Left cardiac atrium (tissue), 4 donors: ENCODE measurements at regions of chr17 and their contacts with region 1.

Region 1: GRCh38 chr17:5065227-5065744 is 13.0 kb upstream of the ZFP3 start:
- DNase-seq: no peak
- ATAC-seq: peak in 1 of 2 donors; percentile 19

Region 2: DNA sequence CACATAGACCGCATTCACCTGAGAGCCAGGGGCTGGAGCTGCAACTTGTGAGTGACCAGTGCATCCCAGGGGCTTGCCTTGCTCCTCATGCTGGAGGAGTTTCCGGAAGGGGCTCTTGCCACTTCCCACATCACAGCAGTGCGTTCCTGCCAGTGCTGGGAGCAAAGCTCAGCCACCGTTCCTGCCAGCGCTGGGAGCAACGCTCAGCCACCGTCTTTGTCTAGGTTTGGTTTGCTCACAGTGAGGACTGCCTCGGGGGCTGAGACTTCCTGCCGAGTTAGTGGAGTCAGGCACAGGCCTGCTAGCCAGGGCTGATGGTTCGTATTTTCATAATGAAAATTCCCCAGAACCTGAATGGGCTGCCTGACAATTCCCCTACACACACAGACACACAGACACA is 157.0 kb before region 1 on chr17:
- intact Hi-C with region 1: loop called (anchors 1 to 10 kb)
- DNase-seq: no peak
- ATAC-seq: peak; percentile 18 to 25

Region 3: DNA sequence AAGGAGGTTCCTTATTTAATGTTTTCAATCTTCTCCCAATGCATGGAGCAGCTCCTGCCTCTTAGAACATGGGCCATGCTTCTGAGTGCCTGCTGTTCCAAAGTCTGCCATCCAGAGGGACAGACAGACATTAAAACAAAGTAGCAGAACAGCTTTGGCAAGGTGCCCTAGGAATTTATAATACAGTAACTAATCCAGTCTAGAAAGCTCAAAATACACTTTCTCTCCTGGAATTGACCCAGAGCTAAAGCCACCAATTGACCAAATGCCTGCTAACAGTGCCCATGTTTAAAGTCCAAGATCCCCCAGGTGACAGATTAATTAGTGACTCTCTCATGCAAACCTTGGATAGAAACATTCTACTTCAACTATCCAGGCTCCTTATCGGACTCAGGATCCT is 151.3 kb before region 1 on chr17:
- intact Hi-C with region 1: loop called (anchors 1 to 10 kb)
- DNase-seq: no peak
- ATAC-seq: no peak

Region 4: GRCh38 chr17:4939796-4940624 is 125.3 kb before region 1 on chr17 and contains the starts of genes RNF167 and SLC25A11:
- intact Hi-C with region 1: no loop called
- DNase-seq: peak; percentile 96
- ATAC-seq: peak; percentile 93 to 94
- total RNA-seq, gene RNF167: 76.2 to 95.6 TPM
- total RNA-seq, gene SLC25A11: 166 to 175 TPM

Region 5: GRCh38 chr17:5131146-5131715 is 65.9 kb after region 1 on chr17:
- intact Hi-C with region 1: no loop called
- DNase-seq: no peak
- ATAC-seq: no peak

Region 6: GRCh38 chr17:5598457-5598856 is 533.2 kb after region 1 on chr17:
- intact Hi-C with region 1: no loop called
- DNase-seq: no peak
- ATAC-seq: no peak